WTC11 (cell line): ENCODE measurements at regions of chr11 and their contacts with region 1.

Region 1: DNA sequence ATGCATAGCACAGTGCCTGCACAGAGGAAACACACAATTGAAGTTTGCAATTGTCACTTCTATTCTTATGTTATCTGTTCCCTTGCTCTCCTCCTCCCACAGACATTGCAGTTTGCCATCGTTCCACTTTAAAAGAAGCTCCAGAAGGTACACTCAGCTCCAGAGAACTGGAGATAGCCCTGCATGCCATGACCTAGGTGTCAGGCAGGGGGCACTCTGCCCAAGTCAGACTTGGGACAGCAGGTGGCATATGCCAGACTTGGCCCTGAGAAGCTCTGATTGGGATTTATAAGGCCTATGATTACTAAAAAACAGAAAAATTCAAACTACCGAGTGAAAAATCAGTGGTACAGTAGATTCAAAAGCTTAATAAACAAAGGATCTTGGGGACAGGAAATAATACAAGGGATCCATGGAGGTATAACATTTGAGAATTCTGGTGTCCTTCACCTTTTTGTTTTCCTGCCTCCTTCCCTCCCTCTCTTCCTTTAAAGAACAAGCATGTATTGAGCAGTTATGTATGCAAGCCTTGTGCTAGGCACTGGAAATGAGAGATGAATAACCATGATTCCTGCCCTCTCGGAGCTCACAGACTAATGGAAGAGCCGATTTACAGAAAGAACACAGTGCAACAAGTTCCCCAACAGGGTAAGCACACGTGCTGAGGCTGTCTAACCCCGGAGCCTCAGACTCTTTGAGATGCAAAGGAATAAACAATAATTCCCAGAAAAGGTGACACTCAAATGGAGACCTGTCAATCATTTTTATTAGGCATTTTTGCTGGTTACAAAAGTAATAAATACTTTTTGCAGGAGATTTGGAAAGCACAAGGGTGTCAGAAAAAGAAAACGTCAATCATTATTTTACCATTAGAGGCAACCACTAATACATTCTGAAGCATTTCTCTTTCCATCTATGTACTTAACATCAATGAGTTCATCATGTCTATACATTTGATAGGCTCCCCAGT is 39.8 kb downstream of the TENM4 start:
- DNase-seq: peak; percentile 72
- ATAC-seq: peak; percentile 98
- H3K4me3 Mint-ChIP-seq: no peak overlapping the region
- H3K27ac Mint-ChIP-seq: no peak overlapping the region
- H3K4me1 Mint-ChIP-seq: peaks cover 3% of the 10 kb centered on the region
- H3K27me3 Mint-ChIP-seq: no peaks in the 10 kb centered on the region
- CTCF ChIP-seq: peak; percentile 82

Region 2: GRCh38 chr11:79321263-79321662 is 79.7 kb before region 1 on chr11:
- CTCF ChIA-PET with region 1: interaction called, 12 read pairs
- POLR2A ChIA-PET with region 1: no interaction called
- DNase-seq: no peak
- ATAC-seq: no peak
- H3K4me3 Mint-ChIP-seq: no peak overlapping the region
- H3K27ac Mint-ChIP-seq: no peak overlapping the region
- H3K4me1 Mint-ChIP-seq: peaks cover 3% of the 10 kb centered on the region; the same call in 1 of the 2 replicates
- H3K27me3 Mint-ChIP-seq: no peaks in the 10 kb centered on the region
- CTCF ChIP-seq: no peak

Region 3: GRCh38 chr11:79371152-79371551 is 29.9 kb before region 1 on chr11:
- CTCF ChIA-PET with region 1: interaction called, 15 read pairs
- POLR2A ChIA-PET with region 1: no interaction called
- DNase-seq: no peak
- ATAC-seq: peak; percentile 43
- H3K4me3 Mint-ChIP-seq: no peak overlapping the region
- H3K27ac Mint-ChIP-seq: no peak overlapping the region
- H3K4me1 Mint-ChIP-seq: peaks cover 48% of the 10 kb centered on the region
- H3K27me3 Mint-ChIP-seq: no peaks in the 10 kb centered on the region
- CTCF ChIP-seq: no peak

Region 4: DNA sequence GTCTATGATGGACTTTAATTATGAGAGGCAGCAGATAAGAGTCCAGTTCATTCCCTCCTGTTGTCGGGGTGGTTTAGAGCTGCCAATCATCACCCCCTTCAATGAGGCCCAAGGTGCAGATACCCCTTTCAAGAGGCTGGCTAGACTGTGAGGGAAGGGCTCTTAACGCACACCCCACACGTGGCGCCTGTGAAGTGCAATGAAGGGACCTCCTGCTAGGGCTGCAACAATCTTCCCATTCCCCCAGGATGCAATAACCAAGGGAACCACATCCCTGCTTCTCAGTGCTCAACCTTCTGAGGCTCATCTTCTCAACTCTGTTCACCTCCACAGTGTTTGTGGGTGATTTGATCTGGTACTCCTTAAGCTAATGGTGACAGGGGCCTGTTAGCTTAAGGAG is 20.8 kb after region 1 on chr11:
- CTCF ChIA-PET with region 1: interaction called, 19 read pairs
- POLR2A ChIA-PET with region 1: interaction called, 5 read pairs
- DNase-seq: no peak
- ATAC-seq: no peak; the same call in 1 of the 2 replicates
- H3K4me3 Mint-ChIP-seq: no peak overlapping the region
- H3K27ac Mint-ChIP-seq: no peak overlapping the region
- H3K4me1 Mint-ChIP-seq: peaks cover 39% of the 10 kb centered on the region
- H3K27me3 Mint-ChIP-seq: no peaks in the 10 kb centered on the region
- CTCF ChIP-seq: no peak

Region 5: GRCh38 chr11:79440441-79441194 is 39.6 kb after region 1 on chr11 and contains the start of gene TENM4:
- CTCF ChIA-PET with region 1: interaction called, 42 read pairs
- POLR2A ChIA-PET with region 1: interaction called, 14 read pairs
- DNase-seq: peak; percentile 61
- ATAC-seq: peak; percentile 8
- H3K4me3 Mint-ChIP-seq: peak within 1 kb of the TSS; percentile 86
- H3K27ac Mint-ChIP-seq: no peak within 1 kb of the TSS
- H3K4me1 Mint-ChIP-seq: peaks cover 36% of the 10 kb centered on the region
- H3K27me3 Mint-ChIP-seq: peaks cover 68% of the 10 kb centered on the region
- CTCF ChIP-seq: peak; percentile 10; the same call in 1 of the 2 replicates
- total RNA-seq, gene TENM4: 17.2 to 25.0 TPM (median 18.1 TPM) in 3 replicates

Region 6: DNA sequence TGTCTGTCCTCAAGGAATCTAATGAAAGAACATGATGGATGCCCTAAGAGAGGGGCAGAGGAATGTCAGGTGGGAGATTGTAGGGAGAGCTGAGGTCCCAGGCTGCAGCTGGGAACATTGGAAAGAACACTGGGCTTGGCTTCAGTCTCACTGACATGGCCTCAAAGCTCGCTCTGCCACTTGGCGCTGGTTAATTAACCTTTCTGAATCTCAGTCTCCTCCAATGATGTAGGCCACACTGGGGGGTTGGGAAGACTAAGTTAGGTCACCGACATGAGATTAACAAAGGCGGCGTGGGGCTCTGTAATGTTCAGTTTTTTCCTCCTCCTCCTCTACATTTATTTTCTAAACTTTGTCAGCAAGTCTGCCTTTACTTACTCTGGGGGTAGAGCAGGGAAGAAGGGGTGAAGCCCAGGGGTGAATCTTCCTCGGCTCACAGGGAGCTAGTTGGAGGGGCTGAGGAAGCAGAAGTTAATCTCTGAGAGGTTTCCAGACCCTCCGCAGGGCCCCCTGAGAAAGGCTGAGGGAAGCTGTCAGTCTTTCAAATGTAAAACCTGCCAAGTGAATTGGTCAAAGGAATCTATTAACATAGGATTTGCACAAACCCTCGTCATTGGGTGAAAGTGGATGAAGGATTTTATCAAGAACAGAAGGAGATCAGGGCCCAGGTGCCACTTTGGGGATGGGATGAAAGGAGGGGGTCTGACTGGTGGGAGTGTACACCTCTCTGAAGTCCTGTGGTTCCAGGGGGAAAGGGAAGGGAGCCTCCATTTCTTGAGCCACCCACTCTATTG is 71.9 kb after region 1 on chr11:
- CTCF ChIA-PET with region 1: interaction called, 10 read pairs
- POLR2A ChIA-PET with region 1: no interaction called
- DNase-seq: peak; percentile 70
- ATAC-seq: peak; percentile 87
- H3K4me3 Mint-ChIP-seq: peak overlapping the region; percentile 47
- H3K27ac Mint-ChIP-seq: peak overlapping the region; percentile 94
- H3K4me1 Mint-ChIP-seq: peaks cover 62% of the 10 kb centered on the region
- H3K27me3 Mint-ChIP-seq: peaks cover 6% of the 10 kb centered on the region
- CTCF ChIP-seq: no peak

Region 7: GRCh38 chr11:79493555-79494171 is 92.7 kb after region 1 on chr11:
- CTCF ChIA-PET with region 1: interaction called, 27 read pairs
- POLR2A ChIA-PET with region 1: interaction called, 3 read pairs
- DNase-seq: peak; percentile 96
- ATAC-seq: peak; percentile 97
- H3K4me3 Mint-ChIP-seq: no peak overlapping the region
- H3K27ac Mint-ChIP-seq: no peak overlapping the region
- H3K4me1 Mint-ChIP-seq: peaks cover 12% of the 10 kb centered on the region
- H3K27me3 Mint-ChIP-seq: peaks cover 6% of the 10 kb centered on the region; the same call in 1 of the 2 replicates
- CTCF ChIP-seq: peak; percentile 96